Heart left ventricle (tissue), 16 donors: ENCODE measurements at regions of chr5 and their contacts with region 1.

Region 1: GRCh38 chr5:172502969-172503368 is 48.6 kb upstream of the SH3PXD2B start:
- DNase-seq: peak in 2 of 5 donors; percentile 7 to 12
- ATAC-seq: no peak
- H3K4me3 ChIP-seq: no peak overlapping the region
- H3K27ac ChIP-seq: peak overlapping the region; percentile 35 to 97 (median 85)
- H3K4me1 ChIP-seq: peaks cover 0 to 30% (median 16%) of the 10 kb centered on the region in 12 donors
- H3K27me3 ChIP-seq: no peaks in the 10 kb centered on the region
- CTCF ChIP-seq: no peak
- POLR2A ChIP-seq: no peak

Region 2: GRCh38 chr5:172235132-172235780 is 267.7 kb before region 1 on chr5:
- intact Hi-C with region 1: no loop called
- DNase-seq: no peak
- ATAC-seq: no peak
- H3K4me3 ChIP-seq: no peak overlapping the region
- H3K27ac ChIP-seq: no peak overlapping the region
- H3K4me1 ChIP-seq: peaks cover 0 to 35% (median 9%) of the 10 kb centered on the region in 12 donors
- H3K27me3 ChIP-seq: no peaks in the 10 kb centered on the region
- CTCF ChIP-seq: no peak
- POLR2A ChIP-seq: no peak

Region 3: GRCh38 chr5:172594867-172595466 is 92.0 kb after region 1 on chr5:
- intact Hi-C with region 1: loop called in 1 of 10 experiments (anchors 5 kb)
- DNase-seq: no peak
- ATAC-seq: no peak
- H3K4me3 ChIP-seq: no peak overlapping the region
- H3K27ac ChIP-seq: peak overlapping the region in 1 of 12 donors; percentile 17
- H3K4me1 ChIP-seq: peaks cover 0 to 27% (median 6%) of the 10 kb centered on the region in 12 donors
- H3K27me3 ChIP-seq: no peaks in the 10 kb centered on the region
- CTCF ChIP-seq: no peak
- POLR2A ChIP-seq: no peak